Thyroid gland (tissue), 4 donors: ENCODE measurements at regions of chr11 and their contacts with region 1.

Region 1: DNA sequence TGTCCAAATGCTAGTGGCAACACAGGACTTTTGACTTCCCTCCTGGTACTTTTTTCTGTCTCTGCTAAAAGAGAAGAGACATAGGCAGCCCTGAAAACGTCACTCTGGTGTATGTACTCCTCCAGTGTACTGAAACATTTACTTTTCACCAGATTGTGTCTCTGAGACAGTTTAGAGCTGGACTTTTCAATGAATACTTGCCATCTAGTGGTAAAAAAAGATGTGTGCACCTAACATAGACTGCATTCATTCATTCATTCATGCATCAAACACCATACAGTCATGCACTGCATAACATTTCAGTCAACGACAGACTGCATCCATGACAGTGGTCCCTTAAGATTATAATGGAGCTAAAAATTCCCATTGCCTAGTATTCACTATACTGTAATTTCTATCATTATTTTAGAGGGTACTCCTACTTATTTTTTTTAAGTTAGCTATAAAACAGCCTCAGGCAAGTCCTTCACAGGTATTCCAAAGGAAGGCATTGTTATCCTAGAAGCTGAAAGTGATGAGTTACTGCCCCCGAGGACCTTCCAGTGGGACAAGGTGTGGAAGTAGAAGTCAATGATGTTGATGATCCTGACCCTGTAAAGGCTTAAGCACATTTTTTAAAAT is 186.2 kb downstream of the SPON1 start:
- DNase-seq: no peak
- H3K4me3 ChIP-seq: no peak overlapping the region
- H3K27ac ChIP-seq: no peak overlapping the region
- H3K4me1 ChIP-seq: no peaks in the 10 kb centered on the region
- H3K27me3 ChIP-seq: no peaks in the 10 kb centered on the region
- CTCF ChIP-seq: peak in 4 of 6 experiments; percentile 19 to 51 (median 49)
- POLR2A ChIP-seq: no peak

Region 2: DNA sequence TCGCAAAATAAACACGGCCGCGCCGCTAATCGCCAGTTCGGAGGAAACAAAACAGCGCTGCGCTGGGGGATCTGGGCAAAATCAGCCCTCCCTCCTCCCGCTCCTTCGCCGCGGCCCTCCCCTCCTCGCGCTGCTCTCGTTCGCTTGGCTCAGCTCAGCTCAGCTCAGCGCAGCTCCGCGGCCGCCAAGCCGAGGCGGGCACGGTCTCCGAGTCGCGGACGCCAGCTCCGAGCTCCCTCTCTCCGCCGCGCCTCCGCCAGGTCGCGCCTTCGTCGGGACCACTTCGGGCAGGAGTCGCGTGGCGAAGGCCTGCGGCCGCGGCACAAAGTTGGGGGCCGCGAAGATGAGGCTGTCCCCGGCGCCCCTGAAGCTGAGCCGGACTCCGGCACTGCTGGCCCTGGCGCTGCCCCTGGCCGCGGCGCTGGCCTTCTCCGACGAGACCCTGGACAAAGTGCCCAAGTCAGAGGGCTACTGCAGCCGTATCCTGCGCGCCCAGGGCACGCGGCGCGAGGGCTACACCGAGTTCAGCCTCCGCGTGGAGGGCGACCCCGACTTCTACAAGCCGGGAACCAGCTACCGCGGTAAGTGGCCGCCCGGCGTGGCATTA is 186.1 kb before region 1 on chr11 and contains the start of gene SPON1:
- intact Hi-C with region 1: loop called (anchors 10 kb)
- DNase-seq: peak; percentile 33 to 39
- H3K4me3 ChIP-seq: no peak within 1 kb of the TSS
- H3K27ac ChIP-seq: no peak within 1 kb of the TSS
- H3K4me1 ChIP-seq: peaks cover 5 to 9% of the 10 kb centered on the region in 2 donors
- H3K27me3 ChIP-seq: peaks cover 3% of the 10 kb centered on the region
- CTCF ChIP-seq: no peak
- POLR2A ChIP-seq: no peak
- total RNA-seq, gene SPON1: 7.3 to 14.9 (median 10.9) TPM